Activated CD8-positive, alpha-beta memory T cell treated with anti-CD3 and anti-CD28 coated beads, Interleukin-2, amount 10 ng/mL, durations not matched to agents 7 days and 5 days (primary cell): ENCODE measurements at regions of chr6 and their contacts with region 1.

Region 1: GRCh38 chr6:137873273-137873762 is 6.3 kb downstream of the TNFAIP3 start:
- DNase-seq: peak; percentile 72
- ATAC-seq: peak; percentile 9
- H3K4me3 Mint-ChIP-seq: peak overlapping the region; percentile 79
- H3K27ac Mint-ChIP-seq: peak overlapping the region; percentile 93
- H3K4me1 Mint-ChIP-seq: peaks cover 78% of the 10 kb centered on the region
- H3K27me3 Mint-ChIP-seq: no peaks in the 10 kb centered on the region

Region 2: DNA sequence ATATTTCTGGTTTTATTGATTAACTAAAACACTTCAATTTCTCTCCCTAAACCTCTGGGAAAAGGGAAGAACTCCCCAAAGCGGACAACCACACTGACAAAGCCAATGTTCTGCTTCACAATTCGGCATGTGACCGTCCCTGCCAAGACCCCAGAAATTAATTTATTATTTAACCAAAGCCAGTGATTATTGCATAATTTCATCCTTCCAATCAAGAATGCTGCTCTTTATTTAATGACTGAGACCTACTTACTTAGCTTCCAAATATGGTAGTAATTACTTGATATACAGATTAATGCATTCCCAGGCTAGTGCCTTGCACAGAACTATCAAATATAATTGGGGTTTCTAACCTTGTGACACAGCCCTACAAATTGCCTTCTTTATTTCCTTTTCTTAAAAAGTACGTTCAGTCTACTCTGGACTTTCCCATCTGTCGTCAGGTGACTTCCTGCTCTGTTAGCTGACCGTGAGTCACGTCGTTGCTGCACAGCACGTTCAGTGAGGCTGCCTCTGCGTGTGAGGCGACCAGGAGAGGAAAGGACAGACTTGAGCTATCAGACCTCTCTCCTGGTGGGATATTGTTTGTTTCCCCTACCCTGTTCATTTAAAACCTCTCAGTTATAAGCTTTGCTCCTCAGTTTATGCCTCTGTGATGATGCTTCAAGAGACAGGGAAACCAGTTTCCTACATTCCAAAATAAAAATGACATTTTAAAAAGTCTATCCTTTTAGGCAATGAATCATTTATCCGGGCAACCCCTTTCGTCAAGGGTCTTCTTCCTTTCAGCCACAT is 62.0 kb before region 1 on chr6:
- CTCF ChIA-PET with region 1: interaction called, 25 read pairs
- DNase-seq: peak; percentile 92
- ATAC-seq: peak; percentile 97
- H3K4me3 Mint-ChIP-seq: peak overlapping the region; percentile 43
- H3K27ac Mint-ChIP-seq: peak overlapping the region; percentile 92
- H3K4me1 Mint-ChIP-seq: peaks cover 42% of the 10 kb centered on the region
- H3K27me3 Mint-ChIP-seq: no peaks in the 10 kb centered on the region